ENCODE measurements at regions of chr5 and their contacts with region 1.

Region 1: DNA sequence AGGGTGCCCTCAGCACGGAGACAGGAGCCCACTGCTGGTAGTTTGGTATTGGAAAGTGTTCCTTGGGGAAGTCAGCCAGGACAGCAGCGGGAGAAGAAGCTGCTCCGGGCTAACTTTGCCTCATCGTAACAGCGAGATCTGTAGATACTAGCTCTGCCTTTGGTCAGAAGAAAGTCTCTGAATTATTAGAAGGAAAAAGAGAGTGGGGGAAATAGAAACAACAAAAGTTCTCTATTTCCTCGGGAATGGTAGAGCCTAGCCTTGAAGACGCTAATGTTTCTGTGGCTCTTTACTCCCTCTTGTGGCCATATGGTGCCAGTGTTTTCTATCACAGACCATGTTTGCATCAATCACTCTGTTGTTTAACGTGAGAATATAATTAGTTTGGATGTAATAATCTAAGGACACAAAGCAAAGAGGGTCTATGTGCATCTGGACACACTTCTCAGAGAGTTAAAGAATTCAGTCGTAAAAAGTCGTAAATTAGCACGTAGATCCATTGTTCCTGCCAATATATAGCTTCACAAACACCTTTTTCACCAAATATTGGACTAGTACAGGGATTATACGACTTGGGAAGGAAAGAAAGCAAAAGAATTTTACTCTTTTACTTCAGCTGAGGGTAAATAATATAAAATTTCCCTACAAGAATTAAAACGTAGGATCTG is 40.2 kb upstream of the HSD17B4 start:
- DNase-seq: peak; percentile 84
- H3K27ac ChIP-seq: peak overlapping the region; percentile 65
- CTCF ChIP-seq: peak; percentile 97

Region 2: DNA sequence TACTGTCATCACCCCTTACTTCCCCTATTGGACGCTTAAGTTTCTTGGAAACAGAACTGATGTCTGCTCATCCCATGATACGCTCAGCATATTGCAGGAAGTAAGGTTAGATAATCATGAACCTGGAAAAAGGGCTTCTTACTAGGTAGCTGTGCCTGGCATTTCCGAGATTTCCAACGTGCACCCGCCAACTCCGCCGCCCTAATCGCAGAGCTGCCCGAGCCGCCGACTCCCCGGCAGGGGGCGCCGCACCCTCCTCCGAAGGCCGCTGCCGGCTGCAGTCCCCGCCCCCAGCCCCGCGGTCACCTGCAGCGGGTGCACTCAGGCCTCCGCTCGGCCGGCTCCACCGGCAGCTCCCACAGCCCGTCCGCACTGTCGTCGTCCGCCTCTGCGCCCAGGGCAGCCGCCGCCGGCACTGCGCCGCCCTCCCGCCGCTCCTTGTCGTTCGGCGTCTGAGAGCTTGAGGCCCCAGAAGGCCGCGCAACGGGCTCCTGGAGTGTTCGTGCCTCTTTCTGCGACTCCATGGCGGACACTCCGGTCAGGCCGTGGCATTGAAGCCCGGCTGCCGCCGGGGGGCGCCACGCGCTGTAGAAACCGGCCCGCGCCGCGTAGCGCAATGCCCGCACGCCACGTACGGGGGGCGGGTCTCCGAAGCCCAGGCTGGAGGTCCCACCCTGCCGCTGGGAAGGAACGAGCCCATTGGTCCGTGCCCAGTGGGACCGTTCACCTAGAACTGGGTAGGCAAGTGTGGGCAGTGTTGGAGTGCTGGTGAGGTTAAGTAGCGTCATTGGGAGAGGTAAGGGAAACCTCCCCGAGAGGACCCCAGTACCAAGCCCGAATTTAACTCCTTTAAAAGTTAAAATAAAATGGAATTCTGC is 423.8 kb before region 1 on chr5 and contains the start of gene DTWD2:
- CTCF ChIA-PET with region 1: interaction called, 30 read pairs
- POLR2A ChIA-PET with region 1: no interaction called
- DNase-seq: peak; percentile 99
- H3K27ac ChIP-seq: peak within 1 kb of the TSS; percentile 92
- CTCF ChIP-seq: peak; percentile 99

Region 3: DNA sequence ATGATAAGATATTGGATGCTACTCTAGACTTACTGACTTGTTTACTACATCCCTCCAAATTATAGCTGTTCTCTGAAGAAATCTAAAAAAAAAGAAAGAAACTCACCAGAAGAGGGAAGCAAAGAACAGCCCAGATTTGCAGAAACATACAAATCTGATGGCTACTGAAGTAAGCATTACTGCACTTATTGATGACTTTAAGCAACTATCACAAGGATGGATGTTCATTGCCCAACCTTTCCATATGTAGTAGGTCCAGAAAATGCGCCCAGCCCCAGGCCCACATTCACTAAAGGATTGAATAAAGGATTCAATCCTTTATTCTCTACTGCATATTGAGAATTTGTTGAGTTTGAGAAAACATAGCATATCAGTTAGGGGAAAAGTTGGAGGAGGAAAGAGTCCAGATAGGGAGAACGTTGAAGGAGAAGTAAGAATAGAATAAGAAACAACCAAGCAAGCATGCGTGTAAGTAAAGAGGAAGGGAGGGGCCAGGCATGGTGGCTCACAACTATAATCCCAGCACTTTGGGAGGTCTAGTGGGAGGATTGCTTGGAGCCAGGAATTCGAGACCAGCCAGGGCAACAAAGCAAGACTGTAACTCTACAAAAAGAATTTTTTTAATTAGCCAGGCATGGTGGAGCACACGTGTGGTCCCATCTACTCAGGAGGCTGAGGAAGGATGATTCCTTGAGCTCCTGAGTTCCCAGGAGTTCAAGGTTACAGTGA is 389.9 kb before region 1 on chr5:
- CTCF ChIA-PET with region 1: interaction called, 19 read pairs
- POLR2A ChIA-PET with region 1: no interaction called
- DNase-seq: peak; percentile 57
- H3K27ac ChIP-seq: no peak overlapping the region
- CTCF ChIP-seq: peak; percentile 68

Region 4: DNA sequence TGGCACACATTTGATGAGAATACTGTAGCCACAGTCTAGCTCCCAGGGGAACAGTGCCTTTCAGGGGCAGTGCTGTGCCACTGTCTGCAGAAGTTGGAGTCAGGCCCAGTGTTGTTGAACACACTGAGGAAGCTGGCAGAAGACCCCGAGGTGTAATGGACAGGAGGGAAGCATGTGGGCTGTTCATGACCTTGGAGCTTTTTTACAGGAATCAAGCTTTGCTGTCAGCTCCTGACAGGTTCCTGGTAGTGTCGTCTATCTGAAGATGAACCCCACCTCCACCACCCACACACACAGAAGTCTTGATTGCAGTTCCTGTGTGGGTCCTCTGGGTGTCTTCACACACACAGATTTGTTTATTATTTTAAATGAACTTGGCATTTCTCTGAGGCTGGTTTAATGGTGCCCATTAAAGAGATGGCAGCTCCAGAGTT is 96.5 kb before region 1 on chr5:
- CTCF ChIA-PET with region 1: interaction called, 15 read pairs
- POLR2A ChIA-PET with region 1: no interaction called
- DNase-seq: peak; percentile 67
- H3K27ac ChIP-seq: no peak overlapping the region
- CTCF ChIP-seq: peak; percentile 35; the same call in 1 of the 2 replicates

Region 5: DNA sequence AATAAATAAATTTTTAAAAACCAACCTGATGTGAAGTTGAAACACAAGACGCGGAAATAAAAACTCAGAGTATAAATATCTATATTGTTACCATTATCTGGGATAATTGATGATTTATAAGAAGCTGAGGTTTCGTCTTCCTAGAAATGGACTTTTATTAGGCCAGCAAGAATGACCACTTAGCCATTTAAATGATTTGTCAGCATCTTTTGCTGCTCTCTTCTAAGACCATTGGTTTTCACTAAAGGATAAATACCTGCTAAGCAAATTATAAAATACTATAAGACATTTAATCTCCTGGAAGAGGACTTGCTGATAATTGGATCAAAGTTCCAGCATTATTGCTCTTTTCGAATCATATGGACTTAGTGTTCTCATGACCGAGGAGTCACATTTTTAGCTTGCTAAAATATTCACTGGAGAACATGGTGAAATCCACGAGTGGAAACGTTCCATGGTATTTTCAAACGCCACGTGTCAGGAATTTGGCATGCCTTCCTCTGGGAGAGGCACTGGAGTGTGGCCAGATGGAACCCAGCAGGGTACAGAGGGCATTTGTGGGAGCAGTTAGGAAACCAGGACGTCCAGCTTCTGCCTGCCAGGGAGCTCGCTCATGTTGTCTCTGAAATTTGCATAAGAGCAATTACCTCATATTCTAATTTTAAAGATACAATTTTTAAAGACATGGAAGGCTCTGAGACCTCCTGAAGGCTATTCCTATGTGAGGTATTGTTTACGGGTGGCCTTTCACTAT is 13.2 kb before region 1 on chr5:
- CTCF ChIA-PET with region 1: interaction called, 14 read pairs
- POLR2A ChIA-PET with region 1: no interaction called
- DNase-seq: no peak
- H3K27ac ChIP-seq: peak overlapping the region; percentile 63
- CTCF ChIP-seq: no peak

Region 6: GRCh38 chr5:119541716-119542115 is 129.6 kb after region 1 on chr5:
- CTCF ChIA-PET with region 1: no interaction called
- POLR2A ChIA-PET with region 1: no interaction called
- DNase-seq: no peak
- H3K27ac ChIP-seq: no peak overlapping the region
- CTCF ChIP-seq: no peak